ENCODE measurements at regions of chr4 and their contacts with region 1.

Region 1: GRCh38 chr4:62275470-62275869 is 1075.3 kb downstream of the ADGRL3 start:
- DNase-seq: no peak
- H3K4me3 ChIP-seq: no peak overlapping the region
- H3K27ac ChIP-seq: no peak overlapping the region
- H3K4me1 ChIP-seq: no peaks in the 10 kb centered on the region
- H3K27me3 ChIP-seq: no peaks in the 10 kb centered on the region
- CTCF ChIP-seq: no peak
- EP300 ChIP-seq: no peak
- POLR2A ChIP-seq: no peak

Region 2: DNA sequence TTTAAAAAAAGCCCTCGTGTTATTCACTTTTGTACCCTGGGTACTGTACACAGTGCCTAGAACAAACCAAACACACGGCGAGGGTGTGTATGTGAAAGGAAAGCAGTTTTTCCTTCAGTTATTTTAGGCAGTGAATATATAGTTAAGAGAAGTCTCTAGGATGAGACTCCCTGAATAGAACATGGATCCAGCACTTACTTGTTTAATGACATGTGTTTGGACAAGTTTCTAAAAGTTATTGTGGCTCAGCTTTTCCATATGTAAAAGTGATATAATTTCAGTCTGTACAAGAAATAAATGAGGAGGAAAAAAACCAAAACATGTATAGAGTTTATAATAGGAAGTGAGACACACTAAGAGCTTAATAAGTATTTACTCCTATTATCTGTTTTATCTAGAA is 802.2 kb before region 1 on chr4:
- in situ Hi-C with region 1: no loop called
- intact Hi-C with region 1: no loop called
- DNase-seq: no peak
- H3K4me3 ChIP-seq: no peak overlapping the region
- H3K27ac ChIP-seq: no peak overlapping the region
- H3K4me1 ChIP-seq: no peaks in the 10 kb centered on the region
- H3K27me3 ChIP-seq: no peaks in the 10 kb centered on the region
- CTCF ChIP-seq: no peak
- EP300 ChIP-seq: no peak
- POLR2A ChIP-seq: no peak

Region 3: DNA sequence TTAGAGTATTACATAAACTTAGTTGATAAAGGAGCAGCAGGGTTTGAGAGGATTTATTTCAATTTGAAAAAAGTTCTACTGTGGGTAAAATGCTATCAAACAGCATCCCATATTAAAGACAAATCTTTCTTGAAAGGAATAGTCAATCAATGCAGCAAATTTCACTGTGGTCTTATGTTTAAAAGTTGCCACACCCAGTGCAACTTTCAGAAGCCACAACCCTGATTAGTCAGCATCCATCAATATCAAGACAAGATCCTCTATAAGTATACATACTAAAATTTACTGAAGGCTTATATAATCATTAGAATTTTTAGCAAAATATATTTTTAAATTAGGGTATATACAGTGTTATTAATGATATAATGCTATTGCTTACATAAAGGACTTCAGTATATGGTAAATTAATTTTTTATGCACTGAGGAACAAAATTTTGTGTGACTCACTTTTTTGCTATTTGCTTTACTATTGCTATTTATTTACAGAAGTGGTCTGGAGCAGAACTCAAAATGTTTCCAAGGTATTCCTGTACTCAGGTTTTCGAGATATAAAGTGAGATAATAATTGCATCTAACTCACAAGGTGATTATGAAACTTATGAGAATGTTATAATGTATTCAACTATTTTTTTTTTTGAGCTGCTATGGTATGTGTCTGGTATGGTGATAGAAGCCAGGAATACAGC is 52.3 kb after region 1 on chr4:
- in situ Hi-C with region 1: no loop called
- intact Hi-C with region 1: loop called (anchors 2 kb)
- DNase-seq: no peak
- H3K4me3 ChIP-seq: no peak overlapping the region
- H3K27ac ChIP-seq: no peak overlapping the region
- H3K4me1 ChIP-seq: no peaks in the 10 kb centered on the region
- H3K27me3 ChIP-seq: no peaks in the 10 kb centered on the region
- CTCF ChIP-seq: no peak
- EP300 ChIP-seq: no peak
- POLR2A ChIP-seq: no peak

Region 4: DNA sequence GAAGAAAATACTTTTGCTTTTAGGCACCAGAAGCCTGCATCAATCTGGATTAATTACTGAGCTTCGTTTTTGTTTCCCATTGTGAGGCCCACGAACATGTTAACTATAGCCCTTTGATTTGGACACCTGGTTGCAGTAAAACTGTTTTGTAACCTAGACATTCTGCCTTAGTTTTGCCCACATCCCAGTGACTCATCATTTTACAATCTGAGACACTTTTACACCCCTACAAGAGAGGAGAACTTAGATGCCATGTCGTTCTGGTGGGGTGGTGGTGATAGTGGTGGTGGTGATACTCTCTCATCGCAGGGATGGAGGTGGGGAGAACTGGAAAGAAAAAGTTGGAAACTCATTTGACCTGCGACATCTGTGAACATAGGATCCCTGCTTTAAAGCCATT is 181.9 kb after region 1 on chr4:
- in situ Hi-C with region 1: no loop called
- intact Hi-C with region 1: no loop called
- DNase-seq: no peak
- H3K4me3 ChIP-seq: no peak overlapping the region
- H3K27ac ChIP-seq: no peak overlapping the region
- H3K4me1 ChIP-seq: no peaks in the 10 kb centered on the region
- H3K27me3 ChIP-seq: no peaks in the 10 kb centered on the region
- CTCF ChIP-seq: no peak
- EP300 ChIP-seq: no peak
- POLR2A ChIP-seq: no peak